IMR-90 (cell line): ENCODE measurements at regions of chr7 and their contacts with region 1.

Region 1: GRCh38 chr7:77338883-77339629 is 77.1 kb downstream of the GSAP start:
- DNase-seq: peak; percentile 45
- ATAC-seq: no peak; the same call in 1 of the 2 replicates
- H3K4me3 ChIP-seq: no peak overlapping the region
- H3K27ac ChIP-seq: no peak overlapping the region
- H3K4me1 ChIP-seq: peaks cover 3% of the 10 kb centered on the region
- H3K27me3 ChIP-seq: no peaks in the 10 kb centered on the region
- CTCF ChIP-seq: no peak
- POLR2A ChIP-seq: no peak
- RAD21 ChIP-seq: no peak

Region 2: DNA sequence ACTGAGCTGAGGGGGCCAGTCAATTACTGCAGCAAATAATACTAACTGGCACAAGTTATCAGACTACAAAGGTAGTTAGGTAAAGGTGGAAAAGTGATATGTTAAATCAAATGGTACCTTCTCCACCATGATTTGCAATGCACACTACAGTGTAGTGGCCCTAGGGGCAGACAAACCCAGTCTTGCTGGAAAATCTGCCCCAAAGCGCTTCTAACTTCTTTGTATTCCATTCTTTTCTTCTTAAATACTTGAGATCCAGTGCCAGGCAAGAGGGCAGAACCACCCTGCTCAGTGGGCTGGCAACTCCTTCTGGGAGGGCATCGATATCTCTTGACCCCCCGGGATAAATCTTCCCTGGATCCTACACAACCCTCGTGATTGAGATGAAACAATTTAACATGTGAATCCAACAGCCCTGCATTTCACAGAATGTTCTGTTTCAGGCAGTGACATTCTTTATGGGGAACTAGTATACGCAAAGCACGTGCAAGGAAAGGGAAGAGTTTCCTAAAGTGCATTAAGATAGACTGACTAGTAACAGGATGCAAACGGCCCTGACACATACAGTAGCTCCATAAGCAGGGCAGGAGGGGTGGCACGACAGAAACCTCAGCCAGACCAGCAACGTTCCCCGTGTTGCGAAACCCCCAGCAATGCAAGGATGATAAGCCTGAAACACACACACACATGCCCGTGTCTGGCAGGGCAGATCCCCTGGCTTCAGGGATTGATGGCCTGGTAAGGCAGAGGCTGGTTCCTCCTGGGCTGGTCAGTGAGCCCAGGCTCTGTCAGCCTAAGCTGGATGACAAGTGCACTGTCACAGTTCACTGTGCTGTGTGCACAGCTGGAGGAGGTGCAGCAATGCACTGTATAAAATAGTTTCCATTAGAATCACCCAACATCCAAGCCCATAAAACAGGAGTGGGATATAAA is 12.1 kb before region 1 on chr7:
- CTCF ChIA-PET with region 1: no interaction called
- POLR2A ChIA-PET with region 1: no interaction called
- dilution Hi-C with region 1: no loop called
- in situ Hi-C with region 1: no loop called
- intact Hi-C with region 1: no loop called
- DNase-seq: peak; percentile 91
- ATAC-seq: peak; percentile 74
- H3K4me3 ChIP-seq: no peak overlapping the region
- H3K27ac ChIP-seq: peak overlapping the region; percentile 78
- H3K4me1 ChIP-seq: peaks cover 27% of the 10 kb centered on the region
- H3K27me3 ChIP-seq: no peaks in the 10 kb centered on the region
- CTCF ChIP-seq: no peak
- POLR2A ChIP-seq: no peak
- RAD21 ChIP-seq: peak; percentile 24; the same call in 1 of the 2 replicates

Region 3: GRCh38 chr7:77415823-77416622 is 77.0 kb after region 1 on chr7 and contains the start of gene GSAP:
- CTCF ChIA-PET with region 1: interaction called, 3 read pairs
- POLR2A ChIA-PET with region 1: interaction called, 10 read pairs
- dilution Hi-C with region 1: no loop called
- in situ Hi-C with region 1: no loop called
- intact Hi-C with region 1: no loop called
- DNase-seq: no peak
- ATAC-seq: peak; percentile 84
- H3K4me3 ChIP-seq: peak within 1 kb of the TSS; percentile 72
- H3K27ac ChIP-seq: peak within 1 kb of the TSS; percentile 36; the same call in 1 of the 2 replicates
- H3K4me1 ChIP-seq: peaks cover 3% of the 10 kb centered on the region
- H3K27me3 ChIP-seq: no peaks in the 10 kb centered on the region
- CTCF ChIP-seq: no peak
- POLR2A ChIP-seq: no peak
- RAD21 ChIP-seq: no peak
- total RNA-seq, gene GSAP: 1.8 and 1.9 TPM in 2 replicates